Heart left ventricle (tissue), 16 donors: ENCODE measurements at regions of chr9 and their contacts with region 1.

Region 1: GRCh38 chr9:133459476-133460404 is at the start of gene CACFD1:
- DNase-seq: peak; percentile 95 to 97 (median 97)
- ATAC-seq: peak; percentile 93 to 96 (median 94)
- H3K4me3 ChIP-seq: peak within 1 kb of the TSS; percentile 56 to 97 (median 84)
- H3K27ac ChIP-seq: peak within 1 kb of the TSS; percentile 81 to 98 (median 92)
- H3K4me1 ChIP-seq: peaks cover 0 to 21% (median 13%) of the 10 kb centered on the region in 12 donors
- H3K27me3 ChIP-seq: no peaks in the 10 kb centered on the region
- CTCF ChIP-seq: no peak
- POLR2A ChIP-seq: peak in 1 of 2 donors; percentile 76
- total RNA-seq, gene CACFD1: 8.0 to 15.3 (median 11.6) TPM

Region 2: DNA sequence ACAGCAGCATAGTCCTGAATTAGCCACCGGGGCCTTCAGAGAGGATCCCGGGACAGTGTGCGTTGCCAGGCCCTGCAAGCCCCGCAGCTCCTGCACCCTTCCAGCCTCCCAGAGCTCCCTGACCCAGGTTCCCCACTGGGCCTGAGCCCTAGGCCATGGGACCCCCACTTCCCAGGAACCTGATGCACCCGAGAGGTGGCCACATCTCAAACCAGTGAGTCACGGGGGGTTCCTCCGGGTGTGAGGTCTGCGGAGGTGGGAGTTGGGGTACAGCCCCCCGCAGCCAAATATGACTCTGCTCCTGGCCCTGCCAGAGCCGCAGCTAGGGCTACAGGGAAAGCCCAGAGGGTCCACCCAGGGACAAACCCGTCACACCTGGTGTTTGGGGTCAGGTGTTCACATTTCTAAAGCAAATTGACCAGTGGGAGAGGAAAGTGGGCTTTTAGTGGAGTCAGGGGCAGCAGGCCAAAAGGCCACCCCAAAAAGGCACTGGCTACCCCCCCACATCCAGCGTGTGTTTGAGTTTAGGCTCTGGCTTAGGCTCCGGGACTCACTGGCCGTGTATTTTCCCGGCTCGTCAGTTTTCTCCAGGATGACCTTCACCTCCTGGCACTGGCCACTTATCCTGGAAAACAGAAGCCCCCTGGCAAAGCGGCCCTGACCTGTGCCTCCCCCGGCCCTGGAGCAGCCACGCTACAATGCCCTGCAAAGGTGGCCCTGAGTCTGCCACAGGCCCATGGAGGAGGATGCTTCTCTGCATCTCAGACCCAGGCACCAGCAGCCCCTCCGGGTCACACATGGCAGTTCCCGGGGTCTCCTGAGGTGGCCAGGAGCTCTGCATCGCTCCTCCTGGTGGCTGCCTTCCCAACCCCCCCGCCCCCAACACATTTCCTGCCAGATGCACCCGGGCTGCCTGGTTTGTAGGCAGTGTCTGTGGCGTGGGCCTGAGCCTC is 233.2 kb before region 1 on chr9:
- intact Hi-C with region 1: no loop called
- DNase-seq: no peak
- ATAC-seq: no peak
- H3K4me3 ChIP-seq: no peak overlapping the region
- H3K27ac ChIP-seq: peak overlapping the region in 2 of 12 donors; percentile 1 to 55
- H3K4me1 ChIP-seq: peaks cover 0 to 10% (median 2%) of the 10 kb centered on the region in 12 donors
- H3K27me3 ChIP-seq: peaks cover 0 to 4% (median 0%) of the 10 kb centered on the region in 9 donors
- CTCF ChIP-seq: no peak
- POLR2A ChIP-seq: no peak

Region 3: DNA sequence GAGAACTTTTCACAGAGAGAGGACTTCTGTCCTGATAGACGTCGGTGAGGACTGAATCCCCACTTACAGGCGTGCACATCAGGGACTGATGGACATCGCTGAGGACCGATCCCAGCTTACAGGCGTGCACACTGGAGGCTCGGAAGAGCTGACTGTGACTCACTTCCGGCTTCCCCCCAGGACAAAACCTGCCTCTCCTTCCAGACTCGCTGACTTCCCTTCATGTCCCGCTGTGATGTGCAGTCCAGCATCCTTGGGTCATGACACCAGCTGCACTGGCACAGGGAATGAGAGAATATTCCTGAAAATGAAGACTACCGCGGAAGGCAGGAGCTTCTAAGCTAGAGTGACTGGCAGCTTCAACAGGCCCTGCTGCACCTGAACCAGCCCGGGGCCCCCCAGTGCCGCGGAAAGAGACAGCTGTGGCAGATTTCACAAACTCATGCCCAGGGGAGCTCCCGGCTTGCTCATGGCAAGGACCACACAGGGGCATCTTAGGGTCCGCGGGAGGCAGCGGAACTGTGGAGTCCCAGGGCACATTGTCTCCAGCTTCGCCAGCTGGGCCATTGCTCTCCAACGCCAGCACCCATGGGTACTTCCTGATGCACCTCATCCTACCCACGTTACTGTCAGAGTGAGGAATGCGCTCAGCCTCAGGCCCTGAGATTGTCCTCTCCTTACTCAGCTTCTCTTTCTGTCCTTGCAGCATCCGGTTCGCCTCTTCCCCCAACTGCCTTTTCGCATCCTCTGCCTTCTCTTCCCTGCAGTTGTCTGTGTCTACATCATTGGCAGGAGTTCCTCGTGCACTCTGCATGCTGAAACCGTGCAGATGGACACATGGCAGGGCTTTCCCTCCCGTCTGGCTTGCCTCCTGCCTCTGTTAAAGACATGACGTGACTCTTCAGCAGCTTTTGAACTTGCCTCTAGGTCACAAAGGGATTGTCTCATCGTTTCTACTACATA is 153.2 kb before region 1 on chr9:
- intact Hi-C with region 1: no loop called
- DNase-seq: no peak
- ATAC-seq: peak in 2 of 4 donors; percentile 36 to 39
- H3K4me3 ChIP-seq: no peak overlapping the region
- H3K27ac ChIP-seq: no peak overlapping the region
- H3K4me1 ChIP-seq: no peaks in the 10 kb centered on the region
- H3K27me3 ChIP-seq: peaks cover 0 to 11% (median 0%) of the 10 kb centered on the region in 9 donors
- CTCF ChIP-seq: no peak
- POLR2A ChIP-seq: no peak

Region 4: GRCh38 chr9:133417541-133418461 is 41.9 kb before region 1 on chr9 and contains the start of gene REXO4:
- intact Hi-C with region 1: loop called in 2 of 10 experiments (anchors 2 to 10 kb)
- DNase-seq: peak; percentile 83 to 90 (median 86)
- ATAC-seq: peak; percentile 88 to 98 (median 96)
- H3K4me3 ChIP-seq: peak within 1 kb of the TSS; percentile 68 to 97 (median 84)
- H3K27ac ChIP-seq: peak within 1 kb of the TSS; percentile 29 to 92 (median 84)
- H3K4me1 ChIP-seq: peaks cover 6 to 31% (median 19%) of the 10 kb centered on the region in 12 donors
- H3K27me3 ChIP-seq: no peaks in the 10 kb centered on the region
- CTCF ChIP-seq: peak in 1 of 12 donors; percentile 10
- POLR2A ChIP-seq: peak in 1 of 2 donors; percentile 52
- total RNA-seq, gene REXO4: 9.6 to 21.5 (median 13.7) TPM

Region 5: GRCh38 chr9:133478851-133479711 is 19.3 kb after region 1 on chr9 and contains the start of gene SLC2A6:
- intact Hi-C with region 1: loop called in 2 of 10 experiments (anchors 2 kb)
- DNase-seq: peak; percentile 88 to 93 (median 92)
- ATAC-seq: peak; percentile 91 to 99 (median 98)
- H3K4me3 ChIP-seq: peak within 1 kb of the TSS; percentile 28 to 84 (median 64)
- H3K27ac ChIP-seq: peak within 1 kb of the TSS in 11 of 12 donors; percentile 52 to 87 (median 83)
- H3K4me1 ChIP-seq: peaks cover 0 to 53% (median 17%) of the 10 kb centered on the region in 12 donors
- H3K27me3 ChIP-seq: no peaks in the 10 kb centered on the region
- CTCF ChIP-seq: no peak
- POLR2A ChIP-seq: peak in 1 of 2 donors; percentile 79
- total RNA-seq, gene SLC2A6: 1.8 to 10.4 (median 3.2) TPM

Region 6: GRCh38 chr9:133584559-133585476 is 125.1 kb after region 1 on chr9:
- intact Hi-C with region 1: no loop called
- DNase-seq: peak in 1 of 5 donors; percentile 56
- ATAC-seq: peak in 1 of 4 donors; percentile 5
- H3K4me3 ChIP-seq: no peak overlapping the region
- H3K27ac ChIP-seq: peak overlapping the region in 1 of 12 donors; percentile 54
- H3K4me1 ChIP-seq: peaks cover 4 to 45% (median 27%) of the 10 kb centered on the region in 12 donors
- H3K27me3 ChIP-seq: peaks cover 9 to 36% (median 20%) of the 10 kb centered on the region in 9 donors
- CTCF ChIP-seq: no peak
- POLR2A ChIP-seq: no peak